Natural killer cell (primary cell): ENCODE measurements at regions of chr12 and their contacts with region 1.

Region 1: GRCh38 chr12:121773011-121773777 is 20.3 kb downstream of the RHOF start:
- DNase-seq: peak; percentile 76 to 90
- ATAC-seq: peak; percentile 79 to 91 (median 89)
- H3K4me3 ChIP-seq: no peak overlapping the region
- H3K4me3 Mint-ChIP-seq: no peak overlapping the region
- H3K27ac ChIP-seq: no peak overlapping the region
- H3K27ac Mint-ChIP-seq: no peak overlapping the region
- H3K4me1 ChIP-seq: peaks cover 21% of the 10 kb centered on the region
- H3K4me1 Mint-ChIP-seq: peaks cover 7 to 14% of the 10 kb centered on the region in 2 donors
- H3K27me3 ChIP-seq: no peaks in the 10 kb centered on the region
- H3K27me3 Mint-ChIP-seq: no peaks in the 10 kb centered on the region
- CTCF ChIP-seq: peak; percentile 89

Region 2: GRCh38 chr12:121499929-121500793 is 273.0 kb before region 1 on chr12:
- intact Hi-C with region 1: loop called (anchors 2 kb)
- DNase-seq: peak; percentile 76 to 87
- ATAC-seq: peak; percentile 74 to 78 (median 75)
- H3K4me3 ChIP-seq: no peak overlapping the region
- H3K4me3 Mint-ChIP-seq: no peak overlapping the region
- H3K27ac ChIP-seq: no peak overlapping the region
- H3K27ac Mint-ChIP-seq: peak overlapping the region in 1 of 2 donors; percentile 59
- H3K4me1 ChIP-seq: peaks cover 57% of the 10 kb centered on the region
- H3K4me1 Mint-ChIP-seq: peaks cover 17 to 36% of the 10 kb centered on the region in 2 donors
- H3K27me3 ChIP-seq: no peaks in the 10 kb centered on the region
- H3K27me3 Mint-ChIP-seq: no peaks in the 10 kb centered on the region
- CTCF ChIP-seq: peak; percentile 98

Region 3: DNA sequence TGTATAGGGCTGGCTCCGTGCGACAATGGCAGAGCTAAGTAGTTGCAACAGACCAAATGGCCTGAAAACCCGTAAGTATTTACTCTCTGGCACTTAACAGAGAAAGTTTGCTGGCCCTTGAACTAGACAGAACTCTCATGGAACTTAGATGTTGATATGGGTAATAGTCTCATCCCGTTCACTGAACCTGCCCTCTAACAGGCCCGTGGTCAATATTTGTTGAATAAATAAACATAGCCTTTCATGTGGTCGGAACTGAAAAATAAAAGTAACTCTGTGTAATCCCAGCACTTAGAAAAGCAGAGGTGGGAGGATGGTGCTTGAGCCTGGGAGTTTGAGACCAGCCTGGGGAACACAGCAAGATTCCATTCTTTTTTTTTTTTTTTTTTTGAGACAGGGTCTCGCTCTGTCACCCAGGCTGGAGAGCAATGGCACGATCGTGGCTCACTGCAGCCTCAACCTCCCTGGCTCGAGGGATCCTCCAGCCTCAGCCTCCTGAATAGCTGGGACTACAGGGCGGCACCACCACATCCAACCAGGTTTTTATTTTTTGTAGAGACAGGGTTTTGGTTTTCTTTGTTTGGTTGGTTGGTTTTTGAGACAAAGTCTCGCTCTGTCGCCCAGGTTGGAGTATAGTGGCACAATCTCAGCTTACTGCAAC is 222.1 kb before region 1 on chr12:
- intact Hi-C with region 1: loop called (anchors 2 kb)
- DNase-seq: no peak
- ATAC-seq: no peak
- H3K4me3 ChIP-seq: no peak overlapping the region
- H3K4me3 Mint-ChIP-seq: peak overlapping the region; percentile 70
- H3K27ac ChIP-seq: peak overlapping the region; percentile 53
- H3K27ac Mint-ChIP-seq: peak overlapping the region; percentile 92 to 94
- H3K4me1 ChIP-seq: peaks cover 26% of the 10 kb centered on the region
- H3K4me1 Mint-ChIP-seq: peaks cover 9 to 14% of the 10 kb centered on the region in 2 donors
- H3K27me3 ChIP-seq: no peaks in the 10 kb centered on the region
- H3K27me3 Mint-ChIP-seq: no peaks in the 10 kb centered on the region
- CTCF ChIP-seq: no peak

Region 4: GRCh38 chr12:121697098-121697698 is 76.0 kb before region 1 on chr12:
- intact Hi-C with region 1: loop called (anchors 1 kb)
- DNase-seq: peak in 1 of 2 donors; percentile 80
- ATAC-seq: peak in 2 of 3 donors; percentile 39 to 49
- H3K4me3 ChIP-seq: no peak overlapping the region
- H3K4me3 Mint-ChIP-seq: no peak overlapping the region
- H3K27ac ChIP-seq: no peak overlapping the region
- H3K27ac Mint-ChIP-seq: no peak overlapping the region
- H3K4me1 ChIP-seq: no peaks in the 10 kb centered on the region
- H3K4me1 Mint-ChIP-seq: no peaks in the 10 kb centered on the region
- H3K27me3 ChIP-seq: no peaks in the 10 kb centered on the region
- H3K27me3 Mint-ChIP-seq: peaks cover 0 to 3% of the 10 kb centered on the region in 2 donors
- CTCF ChIP-seq: peak; percentile 79

Region 5: DNA sequence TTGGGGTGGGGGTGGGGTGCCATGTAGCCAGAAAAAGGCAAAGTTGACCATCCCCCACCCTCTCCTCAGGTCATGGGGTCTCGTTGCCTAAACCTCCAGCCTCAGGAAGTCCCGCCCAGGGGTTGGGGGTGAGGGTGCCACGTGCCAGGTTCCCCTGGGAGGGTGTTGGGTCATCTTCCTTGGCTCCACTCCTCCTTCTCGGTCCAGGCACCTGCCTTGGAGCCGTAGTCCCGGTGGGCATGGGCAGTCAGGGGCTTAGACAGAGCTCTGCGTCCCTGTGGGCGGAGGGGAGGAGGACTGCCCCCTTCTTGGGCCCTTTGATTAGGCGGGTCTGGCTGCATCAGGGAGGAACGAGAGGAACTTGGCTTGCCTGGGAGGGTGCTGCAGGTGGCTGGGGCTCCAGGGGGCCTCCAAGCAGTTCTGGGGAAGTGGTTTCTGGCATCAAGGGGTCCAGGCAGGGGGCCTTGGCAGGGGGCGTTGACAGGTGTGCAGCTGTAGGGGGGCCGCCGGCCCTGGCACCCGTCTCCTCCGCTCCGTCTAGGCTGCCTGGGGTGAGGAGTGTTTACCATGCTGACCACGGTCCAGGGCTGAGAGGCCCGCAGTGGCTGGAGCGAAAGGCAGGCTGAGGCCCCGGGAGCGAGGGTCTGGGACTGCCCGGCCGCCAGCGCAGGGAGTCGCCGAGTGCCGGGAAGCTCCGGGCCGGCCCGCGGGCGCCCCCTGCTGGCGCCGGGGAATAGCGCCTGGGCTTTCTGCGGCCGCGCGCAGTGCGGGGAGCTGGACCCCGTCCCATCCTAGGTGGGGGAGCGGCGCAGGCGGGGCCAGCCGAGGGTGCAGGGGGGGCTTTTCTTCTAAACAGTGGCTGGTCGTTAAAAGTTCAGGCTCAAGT is 38.5 kb after region 1 on chr12:
- intact Hi-C with region 1: loop called (anchors 5 kb)
- DNase-seq: peak; percentile 78 to 83
- ATAC-seq: peak; percentile 91 to 94 (median 93)
- H3K4me3 ChIP-seq: peak overlapping the region; percentile 39
- H3K4me3 Mint-ChIP-seq: peak overlapping the region; percentile 85
- H3K27ac ChIP-seq: peak overlapping the region; percentile 22
- H3K27ac Mint-ChIP-seq: peak overlapping the region; percentile 63 to 67
- H3K4me1 ChIP-seq: peaks cover 54% of the 10 kb centered on the region
- H3K4me1 Mint-ChIP-seq: peaks cover 30 to 53% of the 10 kb centered on the region in 2 donors
- H3K27me3 ChIP-seq: no peaks in the 10 kb centered on the region
- H3K27me3 Mint-ChIP-seq: no peaks in the 10 kb centered on the region
- CTCF ChIP-seq: peak; percentile 99

Region 6: DNA sequence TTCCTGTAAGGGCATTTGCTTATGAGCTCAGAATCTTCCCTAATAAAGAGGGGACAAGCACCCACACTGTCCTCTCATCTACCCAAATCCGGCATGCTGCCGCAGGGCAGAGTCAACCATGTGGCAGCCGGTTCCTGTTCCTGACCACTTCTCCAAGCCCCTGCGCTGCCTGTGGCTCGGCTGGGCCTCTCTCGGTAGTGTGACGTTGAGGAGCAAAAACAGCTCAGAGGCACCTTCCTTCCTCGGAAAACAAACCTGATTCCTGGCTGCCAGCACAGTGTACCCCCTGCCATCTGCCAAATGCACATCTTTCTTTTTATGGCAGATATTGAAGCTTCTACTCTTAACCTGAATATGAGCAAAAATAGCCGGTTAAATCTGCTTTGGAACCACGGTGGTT is 195.7 kb after region 1 on chr12:
- intact Hi-C with region 1: no loop called
- DNase-seq: no peak
- ATAC-seq: no peak
- H3K4me3 ChIP-seq: no peak overlapping the region
- H3K4me3 Mint-ChIP-seq: no peak overlapping the region
- H3K27ac ChIP-seq: no peak overlapping the region
- H3K27ac Mint-ChIP-seq: no peak overlapping the region
- H3K4me1 ChIP-seq: peaks cover 12% of the 10 kb centered on the region
- H3K4me1 Mint-ChIP-seq: no peaks in the 10 kb centered on the region
- H3K27me3 ChIP-seq: no peaks in the 10 kb centered on the region
- H3K27me3 Mint-ChIP-seq: peaks cover 0 to 3% of the 10 kb centered on the region in 2 donors
- CTCF ChIP-seq: no peak